CD4-positive, alpha-beta T cell (primary cell): ENCODE measurements at regions of chr14 and their contacts with region 1.

Region 1: GRCh38 chr14:72516936-72517700 is 376.8 kb downstream of the DPF3 start:
- DNase-seq: peak; percentile 48 to 85 (median 66)
- ATAC-seq: peak; percentile 66
- H3K4me3 ChIP-seq: no peak overlapping the region
- H3K4me3 Mint-ChIP-seq: peak overlapping the region; percentile 32
- H3K27ac ChIP-seq: no peak overlapping the region
- H3K27ac Mint-ChIP-seq: peak overlapping the region; percentile 15
- H3K4me1 ChIP-seq: peaks cover 35% of the 10 kb centered on the region
- H3K4me1 Mint-ChIP-seq: peaks cover 52% of the 10 kb centered on the region
- H3K27me3 ChIP-seq: no peaks in the 10 kb centered on the region
- H3K27me3 Mint-ChIP-seq: no peaks in the 10 kb centered on the region
- CTCF ChIP-seq: peak; percentile 81

Region 2: GRCh38 chr14:72535485-72535884 is 18.4 kb after region 1 on chr14:
- CTCF ChIA-PET with region 1: no interaction called
- POLR2A ChIA-PET with region 1: no interaction called
- intact Hi-C with region 1: no loop called
- DNase-seq: peak in 3 of 14 experiments; percentile 55 to 76 (median 56)
- ATAC-seq: peak; percentile 75
- H3K4me3 ChIP-seq: no peak overlapping the region
- H3K4me3 Mint-ChIP-seq: peak overlapping the region; percentile 18
- H3K27ac ChIP-seq: no peak overlapping the region
- H3K27ac Mint-ChIP-seq: no peak overlapping the region
- H3K4me1 ChIP-seq: peaks cover 46% of the 10 kb centered on the region
- H3K4me1 Mint-ChIP-seq: peaks cover 58% of the 10 kb centered on the region
- H3K27me3 ChIP-seq: no peaks in the 10 kb centered on the region
- H3K27me3 Mint-ChIP-seq: no peaks in the 10 kb centered on the region
- CTCF ChIP-seq: no peak

Region 3: GRCh38 chr14:72904840-72905561 is 387.9 kb after region 1 on chr14:
- CTCF ChIA-PET with region 1: interaction called, 26 read pairs
- POLR2A ChIA-PET with region 1: interaction called, 4 read pairs
- intact Hi-C with region 1: loop called (anchors 1 kb)
- DNase-seq: peak in 13 of 14 experiments; percentile 37 to 84 (median 50)
- ATAC-seq: peak; percentile 79
- H3K4me3 ChIP-seq: no peak overlapping the region
- H3K4me3 Mint-ChIP-seq: no peak overlapping the region
- H3K27ac ChIP-seq: no peak overlapping the region
- H3K27ac Mint-ChIP-seq: no peak overlapping the region
- H3K4me1 ChIP-seq: no peaks in the 10 kb centered on the region
- H3K4me1 Mint-ChIP-seq: no peaks in the 10 kb centered on the region
- H3K27me3 ChIP-seq: peaks cover 4 to 8% of the 10 kb centered on the region in 2 experiments
- H3K27me3 Mint-ChIP-seq: peaks cover 18% of the 10 kb centered on the region
- CTCF ChIP-seq: peak; percentile 86

Region 4: GRCh38 chr14:72948481-72949138 is 431.5 kb after region 1 on chr14:
- CTCF ChIA-PET with region 1: interaction called, 16 read pairs
- POLR2A ChIA-PET with region 1: no interaction called
- intact Hi-C with region 1: loop called (anchors 1 kb)
- DNase-seq: peak; percentile 42 to 73 (median 53)
- ATAC-seq: peak; percentile 60
- H3K4me3 ChIP-seq: no peak overlapping the region
- H3K4me3 Mint-ChIP-seq: no peak overlapping the region
- H3K27ac ChIP-seq: no peak overlapping the region
- H3K27ac Mint-ChIP-seq: no peak overlapping the region
- H3K4me1 ChIP-seq: no peaks in the 10 kb centered on the region
- H3K4me1 Mint-ChIP-seq: no peaks in the 10 kb centered on the region
- H3K27me3 ChIP-seq: no peaks in the 10 kb centered on the region
- H3K27me3 Mint-ChIP-seq: no peaks in the 10 kb centered on the region
- CTCF ChIP-seq: peak; percentile 89